Right cardiac atrium (tissue), 5 donors: ENCODE measurements at regions of chr5 and their contacts with region 1.

Region 1: DNA sequence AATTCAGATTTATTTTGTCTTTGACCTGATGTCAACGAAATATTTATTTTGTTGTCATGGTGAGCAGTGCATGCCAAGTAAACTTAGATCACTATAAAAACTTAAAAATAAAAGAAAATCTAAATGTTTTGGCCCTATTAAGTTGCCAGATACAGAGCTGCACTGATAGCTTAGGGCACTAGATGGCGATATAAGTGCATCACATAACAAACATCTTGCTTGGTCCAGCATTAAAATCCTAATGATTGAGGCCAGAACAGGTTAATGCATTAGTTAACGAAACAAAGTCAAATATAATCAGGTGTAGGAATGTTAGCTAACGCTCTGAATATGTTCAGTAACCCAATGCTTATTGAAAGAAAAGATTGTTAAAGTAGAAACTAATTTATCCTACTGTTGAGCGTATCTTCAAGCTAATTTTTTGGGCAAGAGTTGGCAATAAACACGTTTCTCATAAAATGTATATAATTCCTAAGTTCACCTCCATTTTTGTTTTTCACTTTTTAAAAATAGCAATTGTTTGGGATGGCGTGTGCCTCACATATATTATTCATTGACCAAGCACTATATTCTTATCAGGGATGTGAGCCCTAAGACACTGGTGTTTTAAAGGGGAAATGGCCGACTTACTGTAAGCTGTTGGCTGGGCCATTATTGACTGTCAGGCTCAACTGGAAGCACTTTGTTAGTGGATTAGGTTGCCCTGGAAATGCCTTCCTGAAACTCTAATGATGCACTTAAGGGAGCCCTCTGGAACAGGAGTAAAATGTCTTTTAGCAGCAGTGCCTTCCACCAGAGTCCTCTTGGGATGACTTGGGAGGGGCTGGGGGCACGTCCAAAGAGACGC is 33.3 kb downstream of the KCTD16 start:
- DNase-seq: no peak
- ATAC-seq: peak; percentile 61 to 73
- H3K4me3 ChIP-seq: no peak overlapping the region
- H3K27ac ChIP-seq: no peak overlapping the region
- H3K4me1 ChIP-seq: no peaks in the 10 kb centered on the region
- H3K27me3 ChIP-seq: no peaks in the 10 kb centered on the region

Region 2: GRCh38 chr5:144385597-144385996 is 181.6 kb after region 1 on chr5:
- intact Hi-C with region 1: loop called in 1 of 4 experiments (anchors 10 kb)
- DNase-seq: no peak
- ATAC-seq: no peak
- H3K4me3 ChIP-seq: no peak overlapping the region
- H3K27ac ChIP-seq: no peak overlapping the region
- H3K4me1 ChIP-seq: no peaks in the 10 kb centered on the region
- H3K27me3 ChIP-seq: no peaks in the 10 kb centered on the region

Region 3: DNA sequence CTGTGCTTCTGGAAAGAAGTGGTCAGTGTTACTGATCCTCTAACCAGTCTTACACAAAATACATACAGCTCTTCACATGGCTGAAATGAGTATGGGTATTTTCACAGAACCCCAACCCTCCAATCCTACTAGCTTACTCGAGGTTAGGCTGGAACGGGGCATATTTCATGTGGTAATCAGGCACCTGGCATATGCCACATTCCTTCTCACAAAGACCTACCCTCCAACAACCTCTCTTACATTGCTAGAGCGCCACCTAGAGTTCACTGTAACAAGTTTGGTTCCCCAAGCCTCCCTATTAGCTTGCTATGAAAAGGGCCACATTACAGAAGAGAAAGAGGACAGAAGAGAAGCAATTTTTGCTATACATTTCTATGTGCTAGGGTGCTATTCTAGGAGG is 1033.9 kb after region 1 on chr5:
- intact Hi-C with region 1: loop called in 1 of 4 experiments (anchors 10 kb)
- DNase-seq: no peak
- ATAC-seq: no peak
- H3K4me3 ChIP-seq: no peak overlapping the region
- H3K27ac ChIP-seq: no peak overlapping the region
- H3K4me1 ChIP-seq: no peaks in the 10 kb centered on the region
- H3K27me3 ChIP-seq: no peaks in the 10 kb centered on the region